Right ventricle myocardium inferior (tissue), 1 donor: ENCODE measurements at regions of chr3 and their contacts with region 1.

Region 1: DNA sequence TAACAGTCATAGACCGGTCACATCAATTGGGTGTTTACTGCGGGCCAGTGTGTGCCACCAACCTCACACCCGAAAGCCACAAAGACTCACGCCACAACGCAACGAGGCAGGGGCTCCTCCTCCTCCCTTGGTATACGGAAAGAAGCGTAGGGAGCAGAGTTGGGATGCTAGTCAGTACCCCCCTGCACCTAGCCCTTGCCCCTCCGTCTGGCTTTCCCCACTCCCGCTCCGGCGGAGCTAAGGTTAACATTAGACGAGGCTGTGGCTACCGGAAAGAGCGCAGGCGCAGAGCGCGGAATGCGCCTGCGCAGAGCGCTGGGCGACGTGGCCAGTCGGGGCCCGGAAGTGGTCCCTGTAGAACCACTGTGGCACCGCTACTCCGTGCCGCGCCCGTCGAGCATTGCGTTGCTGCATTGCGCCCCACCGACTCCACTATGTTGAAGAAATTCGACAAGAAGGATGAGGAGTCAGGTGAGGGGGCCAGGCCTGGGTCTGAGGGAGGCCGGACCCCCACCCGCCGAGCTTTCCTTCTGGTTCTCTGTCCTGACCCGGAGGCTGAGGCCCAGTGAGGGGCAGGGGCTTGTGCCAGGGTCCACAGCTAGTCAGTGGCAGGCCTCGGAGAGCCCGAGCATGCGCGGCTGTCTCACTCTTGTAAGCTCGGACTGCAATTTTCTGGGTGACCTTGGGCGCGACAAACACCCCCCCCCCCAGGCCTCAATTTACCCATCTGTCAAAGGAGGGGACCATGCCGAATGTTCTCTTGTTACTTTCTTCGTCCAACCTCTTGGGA is at the start of gene COPG1:
- DNase-seq: peak; percentile 94
- ATAC-seq: peak; percentile 95
- total RNA-seq, gene COPG1: 83.9 TPM

Region 2: GRCh38 chr3:128969993-128970739 is 279.3 kb before region 1 on chr3:
- intact Hi-C with region 1: loop called (anchors 2 kb)
- DNase-seq: no peak
- ATAC-seq: peak; percentile 49

Region 3: GRCh38 chr3:129052675-129053074 is 196.8 kb before region 1 on chr3:
- intact Hi-C with region 1: loop called (anchors 1 kb)
- DNase-seq: peak; percentile 76
- ATAC-seq: peak; percentile 83

Region 4: DNA sequence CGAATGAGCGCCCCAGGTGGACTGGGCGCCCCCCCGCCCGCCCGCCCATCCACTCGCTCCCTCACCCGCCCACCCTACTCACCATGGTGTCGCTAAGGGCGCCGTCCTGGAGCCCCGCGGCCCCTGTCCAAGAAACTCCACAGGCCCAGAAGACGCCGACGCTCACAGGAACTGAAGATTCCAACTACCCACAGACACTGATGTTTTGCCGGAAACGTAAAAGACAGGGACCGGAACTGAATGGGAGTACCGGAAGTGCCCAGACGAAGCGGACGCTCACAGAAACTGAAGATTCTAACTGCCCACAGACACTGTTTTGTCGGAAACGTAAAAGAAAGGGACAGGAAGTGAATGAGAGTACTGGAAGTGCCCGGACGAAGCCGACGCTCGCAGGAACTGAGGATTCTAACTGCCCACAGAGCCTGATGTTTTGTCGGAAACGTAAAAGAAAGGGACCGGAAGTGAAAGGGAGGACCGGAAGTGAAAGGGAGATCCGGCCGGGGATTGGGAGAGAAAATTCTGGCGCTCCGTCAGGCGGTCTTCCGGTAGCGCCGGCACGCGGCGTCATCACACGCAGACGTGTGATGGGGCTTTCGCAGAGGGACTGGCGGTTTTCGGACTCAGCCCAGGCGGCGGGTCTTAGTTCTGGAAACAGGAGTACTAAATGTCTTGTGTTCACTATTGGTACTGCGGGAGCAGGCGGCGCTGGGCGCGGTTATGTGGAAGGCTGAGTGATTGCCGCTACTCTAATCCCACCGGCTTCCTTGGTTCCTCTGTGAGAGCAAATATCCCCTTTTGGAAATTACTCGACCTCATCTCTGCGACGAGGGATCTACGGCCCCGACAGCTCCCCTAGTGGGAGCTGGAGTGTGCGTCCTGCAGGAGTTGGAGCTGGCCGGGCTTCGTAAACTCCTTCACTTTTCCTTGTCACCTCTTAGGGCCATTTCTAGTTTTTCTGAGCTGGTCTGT is 88.3 kb before region 1 on chr3 and contains the start of gene ISY1:
- intact Hi-C with region 1: loop called (anchors 1 kb)
- DNase-seq: peak; percentile 92
- ATAC-seq: peak; percentile 92
- total RNA-seq, gene ISY1: 25.1 TPM

Region 5: GRCh38 chr3:129183569-129184395 is 65.7 kb before region 1 on chr3 and contains the start of gene CNBP:
- intact Hi-C with region 1: loop called (anchors 5 kb)
- DNase-seq: peak; percentile 98
- ATAC-seq: peak; percentile 100
- total RNA-seq, gene CNBP: 458 TPM